T-cell (primary cell): ENCODE measurements at regions of chr18 and their contacts with region 1.

Region 1: DNA sequence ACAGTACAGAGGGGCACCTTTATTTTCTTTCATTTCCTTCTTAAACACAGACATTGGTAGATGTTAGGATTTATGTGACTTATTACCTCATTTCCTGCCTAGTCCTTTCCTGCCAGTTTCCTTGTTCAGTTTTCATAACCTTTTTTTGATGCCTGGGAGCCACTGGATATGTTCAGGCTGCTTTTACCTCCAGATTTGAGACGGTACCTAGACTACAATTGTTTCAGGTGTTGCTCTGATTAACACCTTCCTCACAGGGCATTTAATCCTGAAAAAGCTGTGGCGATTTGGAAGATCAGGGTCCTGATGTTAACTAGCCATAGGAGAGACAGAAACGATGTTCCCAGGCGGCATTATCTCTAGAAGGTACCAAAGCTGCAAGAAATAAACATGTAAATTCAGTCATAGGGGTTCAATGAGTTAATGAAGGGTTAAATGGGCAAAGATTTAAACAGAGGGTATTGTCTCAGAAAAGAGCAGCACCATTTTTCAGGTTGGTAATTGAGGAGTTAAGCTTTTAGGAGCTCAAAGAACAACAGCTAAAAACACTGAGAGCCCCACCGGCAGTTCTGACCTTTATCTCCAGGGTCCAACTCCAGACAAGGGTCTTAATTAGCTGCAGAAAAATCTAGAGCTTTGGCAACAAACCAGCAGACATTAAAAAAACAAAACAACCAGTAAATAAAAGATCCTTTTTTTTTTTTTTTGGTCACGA is 93.3 kb downstream of the HRH4 start:
- DNase-seq: no peak
- ATAC-seq: no peak
- H3K4me3 ChIP-seq: no peak overlapping the region
- H3K4me3 Mint-ChIP-seq: no peak overlapping the region
- H3K27ac ChIP-seq: no peak overlapping the region
- H3K27ac Mint-ChIP-seq: no peak overlapping the region
- H3K4me1 ChIP-seq: no peaks in the 10 kb centered on the region
- H3K4me1 Mint-ChIP-seq: peaks cover 0 to 1% (median 0%) of the 10 kb centered on the region in 3 donors
- H3K27me3 ChIP-seq: peaks cover 0 to 2% of the 10 kb centered on the region in 2 experiments
- H3K27me3 Mint-ChIP-seq: peaks cover 10 to 14% of the 10 kb centered on the region in 2 donors

Region 2: DNA sequence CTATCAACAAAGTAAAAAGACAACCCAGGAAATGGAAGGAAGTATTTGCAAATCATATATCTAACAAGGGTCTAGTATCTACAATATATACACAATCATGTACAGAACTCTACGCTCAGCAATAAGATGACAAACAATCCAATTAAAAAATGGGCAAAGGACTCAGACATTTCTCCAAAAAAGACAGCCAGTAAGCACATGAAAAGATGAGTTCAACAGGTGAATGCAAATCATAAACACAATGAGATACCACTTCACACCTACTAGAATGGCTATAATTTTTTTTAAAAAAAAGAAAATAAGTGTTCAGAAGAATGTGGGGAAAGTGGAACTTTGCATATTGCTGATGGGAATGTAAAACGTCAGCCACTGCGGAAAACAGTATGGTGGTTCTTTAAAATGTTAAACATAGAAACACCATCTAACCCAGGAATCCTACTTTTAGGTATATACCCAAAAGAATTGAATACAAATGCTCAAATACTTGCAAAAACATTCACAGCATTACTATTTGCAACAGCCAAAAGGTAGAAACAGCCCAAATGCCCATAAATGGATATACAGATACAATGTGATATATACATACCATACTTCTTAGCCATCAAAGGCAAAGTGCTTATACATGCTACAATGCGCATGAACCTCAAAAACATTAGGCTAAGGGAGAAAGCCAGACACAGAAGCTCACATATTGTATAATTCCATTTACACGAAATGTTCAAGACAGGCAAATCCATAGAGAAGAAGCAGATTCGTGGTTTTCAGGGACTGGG is 293.7 kb before region 1 on chr18:
- CTCF ChIA-PET with region 1: no interaction called
- POLR2A ChIA-PET with region 1: no interaction called
- DNase-seq: no peak
- ATAC-seq: no peak
- H3K4me3 ChIP-seq: no peak overlapping the region
- H3K4me3 Mint-ChIP-seq: no peak overlapping the region
- H3K27ac ChIP-seq: no peak overlapping the region
- H3K27ac Mint-ChIP-seq: no peak overlapping the region
- H3K4me1 ChIP-seq: no peaks in the 10 kb centered on the region
- H3K4me1 Mint-ChIP-seq: no peaks in the 10 kb centered on the region
- H3K27me3 ChIP-seq: no peaks in the 10 kb centered on the region
- H3K27me3 Mint-ChIP-seq: peaks cover 0 to 3% of the 10 kb centered on the region in 2 donors

Region 3: GRCh38 chr18:24570716-24571115 is 17.0 kb after region 1 on chr18:
- CTCF ChIA-PET with region 1: no interaction called
- POLR2A ChIA-PET with region 1: interaction called in 1 of 2 experiments, 15 read pairs
- DNase-seq: no peak
- ATAC-seq: no peak
- H3K4me3 ChIP-seq: no peak overlapping the region
- H3K4me3 Mint-ChIP-seq: no peak overlapping the region
- H3K27ac ChIP-seq: no peak overlapping the region
- H3K27ac Mint-ChIP-seq: no peak overlapping the region
- H3K4me1 ChIP-seq: no peaks in the 10 kb centered on the region
- H3K4me1 Mint-ChIP-seq: no peaks in the 10 kb centered on the region
- H3K27me3 ChIP-seq: peaks cover 0 to 2% of the 10 kb centered on the region in 2 experiments
- H3K27me3 Mint-ChIP-seq: no peaks in the 10 kb centered on the region